IMR-90 (cell line): ENCODE measurements at regions of chr10 and their contacts with region 1.

Region 1: DNA sequence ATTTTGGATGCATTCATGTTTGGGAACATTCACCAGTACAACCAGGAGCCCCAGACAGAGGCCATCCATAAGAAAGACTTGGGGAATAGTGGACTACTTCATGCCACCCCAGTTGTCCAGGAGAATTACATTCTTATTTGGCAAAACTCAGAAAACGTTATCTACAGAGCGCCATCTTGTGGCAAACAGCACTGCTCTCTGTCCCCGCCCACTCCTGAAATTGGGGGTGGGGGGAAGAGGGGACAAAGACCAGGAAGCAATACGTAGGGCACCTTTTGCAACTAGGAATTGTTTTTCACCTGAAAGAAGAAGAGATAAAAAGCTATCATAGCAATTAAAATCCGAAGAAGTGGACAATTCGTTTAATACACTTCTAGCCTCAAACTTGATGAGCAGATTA is 134.6 kb upstream of the MGMT start:
- DNase-seq: peak; percentile 1
- ATAC-seq: no peak
- H3K4me3 ChIP-seq: no peak overlapping the region
- H3K27ac ChIP-seq: no peak overlapping the region
- H3K4me1 ChIP-seq: peaks cover 6% of the 10 kb centered on the region
- H3K27me3 ChIP-seq: no peaks in the 10 kb centered on the region
- CTCF ChIP-seq: no peak
- POLR2A ChIP-seq: no peak
- RAD21 ChIP-seq: no peak

Region 2: DNA sequence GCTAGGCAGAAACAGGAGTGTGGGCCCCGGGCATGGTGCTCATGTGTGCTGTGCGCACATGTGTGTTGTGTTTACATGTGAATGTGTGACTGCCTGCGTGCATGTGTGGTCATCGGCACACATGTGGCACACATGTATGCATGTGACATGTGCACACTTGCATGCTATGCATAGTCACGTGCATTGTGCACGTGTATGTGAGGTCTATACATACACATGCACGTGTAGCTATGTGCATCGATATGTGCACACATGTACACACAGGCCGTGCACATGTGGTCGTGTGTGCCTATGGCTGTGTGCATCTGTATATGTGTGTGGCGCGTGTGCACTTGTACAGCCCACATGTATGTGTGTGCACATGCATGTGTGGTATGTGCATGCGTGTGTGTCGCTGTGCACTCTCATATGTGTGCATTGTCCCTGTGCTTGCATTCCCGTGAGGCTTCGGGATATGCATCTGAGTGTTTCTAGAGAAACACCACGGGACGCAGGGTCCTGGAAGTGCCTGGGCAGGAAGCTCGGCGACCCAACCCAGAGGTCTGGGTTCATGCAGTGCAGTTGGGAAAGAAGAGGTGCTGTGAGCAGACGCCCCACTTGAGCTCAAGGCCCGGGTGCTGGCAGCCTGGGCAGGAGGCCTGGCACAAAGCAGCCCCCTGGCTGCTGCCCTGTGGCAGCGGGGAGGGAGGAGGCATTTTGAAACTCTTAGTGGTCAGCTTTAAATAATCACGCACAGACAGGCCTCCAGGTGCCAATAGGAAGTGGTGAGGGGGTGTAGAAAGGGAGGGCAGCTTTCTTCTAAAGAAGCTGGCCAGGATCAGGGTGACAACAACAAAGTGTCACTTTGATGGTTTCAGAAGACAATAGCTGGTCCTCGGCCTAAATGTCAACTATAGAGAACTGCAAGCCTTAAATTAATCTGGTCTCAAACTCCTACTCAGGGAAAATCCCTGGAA is 275.5 kb before region 1 on chr10:
- CTCF ChIA-PET with region 1: interaction called, 12 read pairs
- POLR2A ChIA-PET with region 1: no interaction called
- dilution Hi-C with region 1: no loop called
- in situ Hi-C with region 1: no loop called
- intact Hi-C with region 1: no loop called
- DNase-seq: no peak
- ATAC-seq: no peak
- H3K4me3 ChIP-seq: no peak overlapping the region
- H3K27ac ChIP-seq: no peak overlapping the region
- H3K4me1 ChIP-seq: no peaks in the 10 kb centered on the region
- H3K27me3 ChIP-seq: no peaks in the 10 kb centered on the region
- CTCF ChIP-seq: no peak
- POLR2A ChIP-seq: no peak
- RAD21 ChIP-seq: no peak

Region 3: DNA sequence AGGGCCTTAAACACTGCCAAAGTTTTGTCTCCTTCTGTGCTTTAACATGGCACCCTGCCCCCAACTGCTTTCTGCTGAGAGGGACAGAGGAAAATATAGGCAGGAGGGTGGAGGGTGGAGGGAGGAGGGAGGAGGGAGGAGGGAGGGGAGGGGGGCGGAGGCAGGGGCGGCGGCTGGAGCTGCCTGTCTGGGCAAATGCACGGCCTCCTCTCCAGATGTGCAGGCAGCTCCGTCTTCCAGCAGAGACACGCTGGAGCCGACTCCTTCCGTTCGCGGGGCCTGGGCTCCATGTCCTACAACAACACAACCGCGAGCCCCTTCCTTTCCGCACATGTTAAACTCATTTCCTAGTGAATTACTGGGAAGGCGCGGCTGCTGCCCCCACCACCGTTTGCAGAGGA is 617.4 kb after region 1 on chr10:
- CTCF ChIA-PET with region 1: no interaction called
- POLR2A ChIA-PET with region 1: no interaction called
- dilution Hi-C with region 1: no loop called
- in situ Hi-C with region 1: no loop called
- intact Hi-C with region 1: loop called (anchors 10 kb)
- DNase-seq: peak; percentile 26
- ATAC-seq: peak; percentile 76
- H3K4me3 ChIP-seq: no peak overlapping the region
- H3K27ac ChIP-seq: peak overlapping the region; percentile 54; the same call in 1 of the 2 replicates
- H3K4me1 ChIP-seq: peaks cover 2% of the 10 kb centered on the region; the same call in 1 of the 2 replicates
- H3K27me3 ChIP-seq: no peaks in the 10 kb centered on the region
- CTCF ChIP-seq: no peak
- POLR2A ChIP-seq: no peak
- RAD21 ChIP-seq: no peak